ENCODE measurements at regions of chr3 and their contacts with region 1.

Region 1: DNA sequence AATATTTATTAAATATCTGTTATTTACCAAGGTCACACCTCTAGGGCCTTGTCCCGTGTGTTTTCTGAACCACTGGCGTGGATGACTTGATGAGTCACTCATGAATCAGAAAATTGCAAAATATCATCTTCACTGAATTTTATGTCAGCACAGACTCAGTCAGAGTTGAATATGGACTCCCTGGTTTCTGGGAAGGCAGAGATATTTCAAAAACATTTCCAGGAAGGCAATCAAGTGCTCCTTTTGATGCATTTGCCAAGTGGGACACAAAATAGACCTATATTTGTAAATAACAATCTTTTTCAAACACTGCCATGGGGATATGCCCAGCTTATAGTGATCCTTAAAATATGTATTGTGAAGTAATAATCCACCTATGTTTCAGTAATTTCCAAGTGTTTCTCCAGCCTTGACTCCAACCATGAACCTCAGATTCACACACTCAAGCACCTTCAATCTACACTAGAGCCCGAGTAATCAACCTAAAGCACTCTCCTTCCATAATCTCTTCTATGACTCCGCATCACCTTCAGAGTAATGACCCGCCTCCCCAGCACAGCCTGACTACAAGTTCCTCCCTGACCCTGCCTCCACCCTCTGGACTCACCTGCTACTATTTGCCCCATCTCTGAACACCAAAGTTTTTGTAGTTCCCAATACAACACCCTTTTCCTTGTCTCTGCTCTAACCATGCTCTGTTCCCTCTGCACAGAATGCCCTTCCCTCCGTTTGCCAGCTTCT is 24.3 kb downstream of the DPH3 start:
- DNase-seq: peak; percentile 81
- ATAC-seq: peak; percentile 62
- H3K4me3 ChIP-seq: no peak overlapping the region
- H3K27ac ChIP-seq: peak overlapping the region; percentile 76; the same call in 1 of the 2 replicates
- H3K4me1 ChIP-seq: peaks cover 18% of the 10 kb centered on the region
- H3K27me3 ChIP-seq: no peaks in the 10 kb centered on the region
- CTCF ChIP-seq: no peak
- POLR2A ChIP-seq: no peak
- RAD21 ChIP-seq: no peak

Region 2: GRCh38 chr3:16183601-16184270 is 56.7 kb before region 1 on chr3:
- CTCF ChIA-PET with region 1: no interaction called
- POLR2A ChIA-PET with region 1: no interaction called
- dilution Hi-C with region 1: no loop called
- in situ Hi-C with region 1: loop called (anchors 5 kb)
- intact Hi-C with region 1: loop called (anchors 2 kb)
- DNase-seq: peak; percentile 98
- ATAC-seq: peak; percentile 90
- H3K4me3 ChIP-seq: no peak overlapping the region
- H3K27ac ChIP-seq: peak overlapping the region; percentile 60; the same call in 1 of the 2 replicates
- H3K4me1 ChIP-seq: peaks cover 35% of the 10 kb centered on the region
- H3K27me3 ChIP-seq: no peaks in the 10 kb centered on the region
- CTCF ChIP-seq: no peak
- POLR2A ChIP-seq: no peak
- RAD21 ChIP-seq: peak; percentile 25